Caco-2 (cell line): ENCODE measurements at regions of chr1 and their contacts with region 1.

Region 1: GRCh38 chr1:58576727-58577653 is at the start of gene TACSTD2:
- DNase-seq: peak; percentile 87
- H3K4me3 ChIP-seq: peak within 1 kb of the TSS; percentile 66
- H3K4me3 Mint-ChIP-seq: peak within 1 kb of the TSS; percentile 85
- H3K27ac Mint-ChIP-seq: peak within 1 kb of the TSS; percentile 91
- H3K4me1 ChIP-seq: peaks cover 7% of the 10 kb centered on the region; the same call in 1 of the 2 replicates
- H3K4me1 Mint-ChIP-seq: no peaks in the 10 kb centered on the region
- H3K27me3 ChIP-seq: no peaks in the 10 kb centered on the region
- H3K27me3 Mint-ChIP-seq: no peaks in the 10 kb centered on the region
- CTCF ChIP-seq: no peak
- total RNA-seq, gene TACSTD2: 25.6 and 31.9 TPM in 2 replicates

Region 2: DNA sequence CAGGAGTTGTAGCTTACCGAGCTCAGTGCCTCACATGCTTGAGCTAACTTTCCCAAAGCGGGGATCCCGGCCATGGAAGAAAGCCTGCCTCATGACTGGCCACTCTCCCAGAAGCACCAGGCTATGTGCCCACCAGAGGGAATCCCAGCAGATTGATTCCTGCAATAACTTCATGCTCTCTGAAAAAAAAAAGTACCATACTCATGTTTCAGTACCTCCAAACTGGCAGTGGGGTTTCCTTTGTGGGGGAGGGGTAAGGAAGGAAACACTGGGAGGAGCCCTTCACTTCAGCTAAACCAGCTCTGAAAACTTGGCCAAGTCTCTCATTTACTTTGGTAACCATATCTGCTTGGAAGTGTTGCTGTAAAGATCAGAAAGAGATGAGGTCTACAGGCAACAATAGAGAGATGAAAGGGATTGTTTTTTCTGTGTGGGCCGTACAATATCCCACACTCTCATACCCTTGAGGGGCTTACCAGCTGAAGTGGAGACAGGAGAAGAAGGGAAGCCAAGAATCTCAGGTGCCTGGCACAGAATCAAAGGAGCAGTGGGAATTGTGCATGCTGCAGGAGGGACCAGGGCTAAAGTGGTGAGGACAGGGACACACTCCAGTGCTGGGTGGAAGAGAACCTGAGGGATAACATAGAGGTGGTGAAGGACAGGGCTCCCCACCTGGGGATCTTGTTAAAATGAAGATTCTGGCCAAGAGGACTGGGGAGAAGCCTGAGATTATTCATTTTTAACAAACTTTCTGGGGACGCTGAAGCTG is 42.5 kb after region 1 on chr1:
- CTCF ChIA-PET with region 1: no interaction called
- POLR2A ChIA-PET with region 1: interaction called, 4 read pairs
- intact Hi-C with region 1: loop called (anchors 1 kb)
- DNase-seq: no peak
- H3K4me3 ChIP-seq: no peak overlapping the region
- H3K4me3 Mint-ChIP-seq: peak overlapping the region; percentile 62
- H3K27ac Mint-ChIP-seq: peak overlapping the region; percentile 95
- H3K4me1 ChIP-seq: peaks cover 27% of the 10 kb centered on the region
- H3K4me1 Mint-ChIP-seq: peaks cover 42% of the 10 kb centered on the region
- H3K27me3 ChIP-seq: no peaks in the 10 kb centered on the region
- H3K27me3 Mint-ChIP-seq: no peaks in the 10 kb centered on the region
- CTCF ChIP-seq: no peak

Region 3: GRCh38 chr1:58652651-58653184 is 75.7 kb after region 1 on chr1:
- CTCF ChIA-PET with region 1: interaction called, 3 read pairs
- POLR2A ChIA-PET with region 1: no interaction called
- intact Hi-C with region 1: loop called (anchors 1 kb)
- DNase-seq: peak; percentile 37 to 65
- H3K4me3 ChIP-seq: no peak overlapping the region
- H3K4me3 Mint-ChIP-seq: no peak overlapping the region
- H3K27ac Mint-ChIP-seq: no peak overlapping the region
- H3K4me1 ChIP-seq: 0 out of 2 replicates have a peak, but pooled peaks cover 5% of the 10 kb centered on the region
- H3K4me1 Mint-ChIP-seq: no peaks in the 10 kb centered on the region
- H3K27me3 ChIP-seq: no peaks in the 10 kb centered on the region
- H3K27me3 Mint-ChIP-seq: no peaks in the 10 kb centered on the region
- CTCF ChIP-seq: peak; percentile 48 to 62